Pancreas (tissue), 10 donors: ENCODE measurements at regions of chr17 and their contacts with region 1.

Region 1: DNA sequence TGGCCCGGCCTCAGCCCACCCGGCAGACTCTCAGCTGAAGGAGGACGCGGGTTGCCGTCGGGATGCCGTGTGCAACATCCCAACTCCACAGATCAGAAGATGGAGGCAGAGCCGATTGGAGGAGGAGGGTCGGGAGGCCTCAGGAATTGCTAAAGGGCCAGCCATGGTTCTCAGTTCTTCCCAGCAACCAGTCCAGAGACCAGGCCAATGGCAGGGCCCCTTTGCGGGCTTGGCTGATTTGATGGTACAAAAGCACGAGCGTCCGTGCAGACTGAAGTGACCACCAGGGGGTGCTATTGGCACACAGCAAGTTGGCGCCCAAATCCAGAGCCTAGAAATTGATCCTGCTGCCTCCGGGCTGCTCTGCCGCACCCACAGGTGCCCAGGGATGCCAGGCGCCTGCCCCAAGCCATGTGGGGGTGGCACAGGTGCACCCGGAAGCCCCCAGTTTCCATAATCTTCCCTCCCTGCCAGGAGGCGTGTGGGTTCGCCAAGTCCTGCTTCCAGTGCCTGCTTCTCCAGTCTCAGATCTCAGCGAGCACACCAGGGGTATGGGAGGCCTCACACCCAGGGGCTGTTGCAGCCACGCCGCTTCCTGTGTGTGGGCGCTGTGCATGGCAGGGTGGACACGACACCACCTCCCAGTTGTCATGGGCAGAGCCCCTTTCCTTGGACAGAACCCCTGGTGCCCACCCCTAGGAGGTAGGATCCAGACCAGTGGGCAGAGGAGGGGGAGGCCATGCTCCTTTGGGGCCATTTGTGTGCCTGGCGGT is 7.1 kb upstream of the TEX19 start:
- DNase-seq: peak; percentile 73 to 92 (median 86)
- ATAC-seq: peak; percentile 74 to 91 (median 90)
- H3K4me3 ChIP-seq: no peak overlapping the region
- H3K27ac ChIP-seq: no peak overlapping the region
- H3K4me1 ChIP-seq: peaks cover 0 to 7% (median 6%) of the 10 kb centered on the region in 3 donors
- H3K27me3 ChIP-seq: no peaks in the 10 kb centered on the region
- CTCF ChIP-seq: peak; percentile 95 to 98 (median 97)

Region 2: GRCh38 chr17:82418001-82418986 is 66.4 kb after region 1 on chr17 and contains the starts of genes HEXD and OGFOD3:
- intact Hi-C with region 1: no loop called
- DNase-seq: peak; percentile 81 to 94 (median 88)
- ATAC-seq: peak; percentile 88 to 96 (median 94)
- H3K4me3 ChIP-seq: peak within 1 kb of the TSS; percentile 60 to 85 (median 79)
- H3K27ac ChIP-seq: peak within 1 kb of the TSS; percentile 65 to 89 (median 87)
- H3K4me1 ChIP-seq: peaks cover 4 to 15% (median 6%) of the 10 kb centered on the region in 3 donors
- H3K27me3 ChIP-seq: no peaks in the 10 kb centered on the region
- CTCF ChIP-seq: no peak
- total RNA-seq, gene HEXD: 25.9 to 57.3 (median 38.1) TPM
- total RNA-seq, gene OGFOD3: 17.8 to 24.4 (median 19.9) TPM

Region 3: DNA sequence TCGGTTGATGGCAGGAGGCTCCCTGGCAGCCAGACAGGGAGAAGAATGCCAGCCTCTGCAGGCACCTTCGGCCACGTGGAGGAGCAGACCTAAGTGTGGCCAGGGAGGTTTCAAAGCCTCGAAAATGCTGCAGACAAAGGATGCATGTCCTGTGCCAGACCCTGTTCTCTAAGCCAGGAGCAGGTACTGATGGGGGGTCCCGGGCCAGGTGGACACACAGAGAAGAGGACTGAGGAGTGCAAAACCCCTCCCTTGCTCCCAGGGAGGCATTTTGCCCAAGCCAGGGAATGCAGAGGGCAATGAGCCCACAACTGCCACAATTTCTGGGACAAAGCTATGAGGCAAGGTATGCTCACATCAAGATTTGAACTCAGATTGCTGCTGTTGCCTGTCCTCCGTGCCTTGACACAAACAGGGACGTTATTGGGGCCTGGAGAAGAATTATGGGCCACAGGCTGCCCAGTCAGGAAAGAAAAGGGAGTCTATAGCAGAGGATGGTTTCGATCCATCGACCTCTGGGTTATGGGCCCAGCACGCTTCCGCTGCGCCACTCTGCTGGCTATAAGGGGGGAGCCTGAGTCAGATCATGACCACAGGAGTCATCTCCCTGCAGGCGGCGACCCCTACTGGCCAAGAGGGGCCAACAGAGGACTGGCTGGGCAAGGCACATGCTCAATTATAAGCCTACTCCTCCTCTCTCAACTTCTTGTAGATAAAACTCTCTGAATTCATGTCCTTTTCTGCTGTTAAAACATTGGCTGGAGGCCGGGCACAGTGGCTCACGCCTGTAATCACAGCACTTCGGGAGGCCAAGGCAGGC is 142.5 kb after region 1 on chr17:
- intact Hi-C with region 1: loop called in 1 of 3 experiments (anchors 10 kb)
- DNase-seq: peak; percentile 82 to 94 (median 92)
- ATAC-seq: peak; percentile 57 to 86 (median 82)
- H3K4me3 ChIP-seq: no peak overlapping the region
- H3K27ac ChIP-seq: peak overlapping the region in 3 of 4 donors; percentile 0 to 46 (median 30)
- H3K4me1 ChIP-seq: peaks cover 0 to 3% (median 0%) of the 10 kb centered on the region in 3 donors
- H3K27me3 ChIP-seq: no peaks in the 10 kb centered on the region
- CTCF ChIP-seq: peak; percentile 72 to 80 (median 76)

Region 4: DNA sequence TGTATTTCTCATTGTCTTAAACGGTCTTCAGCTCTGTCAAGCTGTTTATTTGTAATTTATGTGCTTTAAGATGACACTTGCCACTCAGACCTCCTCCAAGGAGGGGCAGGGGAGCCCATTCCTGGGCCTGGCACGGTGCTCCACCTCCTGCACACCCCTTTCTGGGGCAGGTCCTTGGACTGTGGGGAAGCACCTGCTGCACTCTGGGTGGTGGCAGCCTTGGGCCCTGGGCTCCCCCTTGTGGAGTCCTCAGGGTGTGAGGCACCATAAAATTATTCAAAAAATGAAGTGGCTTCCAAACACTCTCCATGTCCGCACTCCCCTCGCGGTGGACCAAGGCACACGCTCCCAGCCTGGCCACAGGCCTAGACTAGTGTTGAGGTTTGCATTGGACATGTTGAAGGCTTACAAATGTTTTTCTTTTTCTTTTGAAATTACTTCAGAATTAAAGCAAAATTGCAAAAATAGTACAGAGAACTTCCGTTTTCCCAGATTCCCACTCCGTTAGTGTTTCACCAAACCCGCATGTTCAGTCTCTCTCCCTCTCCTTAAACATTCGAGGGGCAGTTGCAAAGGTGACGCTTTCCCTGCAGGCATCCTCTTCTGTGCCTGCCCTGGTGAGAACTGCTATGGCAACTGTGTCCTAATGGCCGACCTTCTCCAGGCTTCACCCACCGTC is 200.0 kb after region 1 on chr17:
- intact Hi-C with region 1: loop called in 2 of 3 experiments (anchors 5 to 10 kb)
- DNase-seq: peak; percentile 64 to 91 (median 76)
- ATAC-seq: peak; percentile 77 to 88 (median 87)
- H3K4me3 ChIP-seq: no peak overlapping the region
- H3K27ac ChIP-seq: peak overlapping the region in 1 of 4 donors; percentile 50
- H3K4me1 ChIP-seq: peaks cover 0 to 38% (median 4%) of the 10 kb centered on the region in 3 donors
- H3K27me3 ChIP-seq: no peaks in the 10 kb centered on the region
- CTCF ChIP-seq: peak; percentile 15 to 84 (median 55)

Region 5: DNA sequence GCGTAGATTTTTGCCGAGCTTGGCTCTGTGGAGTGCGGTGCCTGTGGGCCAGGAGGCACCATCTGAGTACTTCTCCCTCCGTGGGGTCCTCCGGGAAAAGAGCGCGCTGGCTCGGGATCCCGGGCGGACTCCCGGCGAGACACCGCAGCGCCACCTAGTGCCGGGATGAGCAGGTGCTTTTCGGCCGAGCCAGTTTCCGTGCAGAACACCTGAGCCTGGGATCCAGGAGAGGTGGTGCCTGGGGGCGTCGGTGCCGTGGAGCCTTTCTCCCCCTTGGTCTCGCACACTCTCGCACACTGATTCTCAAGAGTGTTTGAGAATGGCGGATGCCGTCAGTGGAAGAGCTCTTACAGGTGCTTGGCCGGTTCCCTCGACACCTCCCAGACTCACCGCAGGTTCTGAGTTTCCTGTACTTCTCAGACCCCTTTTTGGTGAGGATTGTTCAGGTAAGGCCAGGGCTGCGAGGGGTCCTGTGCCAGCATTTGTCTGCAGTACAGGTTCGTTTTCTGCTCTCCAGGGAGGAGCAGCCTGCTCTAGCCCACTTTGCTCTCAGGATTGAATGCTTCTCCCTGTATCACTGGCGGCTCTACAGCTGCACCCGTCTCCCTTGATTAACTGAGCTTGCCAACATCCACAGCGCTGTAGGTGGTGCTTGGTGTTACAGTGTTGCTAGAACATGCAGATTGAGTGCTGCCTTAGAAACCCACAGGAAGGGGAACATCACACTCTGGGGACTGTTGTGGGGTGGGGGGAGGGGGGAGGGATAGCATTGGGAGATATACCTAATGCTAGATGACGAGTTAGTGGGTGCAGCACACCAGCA is 423.3 kb after region 1 on chr17:
- intact Hi-C with region 1: loop called in 1 of 3 experiments (anchors 10 kb)
- DNase-seq: peak; percentile 54 to 92 (median 79)
- ATAC-seq: peak; percentile 71 to 88 (median 84)
- H3K4me3 ChIP-seq: peak overlapping the region in 1 of 4 donors; percentile 29
- H3K27ac ChIP-seq: no peak overlapping the region
- H3K4me1 ChIP-seq: no peaks in the 10 kb centered on the region
- H3K27me3 ChIP-seq: no peaks in the 10 kb centered on the region
- CTCF ChIP-seq: peak; percentile 67 to 88 (median 80)